Aorta (tissue), 5 donors: ENCODE measurements at regions of chr6 and their contacts with region 1.

Region 1: GRCh38 chr6:105136431-105137350 is 43.1 kb downstream of the POPDC3 start:
- DNase-seq: peak; percentile 83 to 84
- ATAC-seq: peak; percentile 73
- H3K4me3 ChIP-seq: peak overlapping the region; percentile 77 to 94
- H3K27ac ChIP-seq: peak overlapping the region in 1 of 2 donors; percentile 1
- H3K4me1 ChIP-seq: no peaks in the 10 kb centered on the region
- H3K27me3 ChIP-seq: no peaks in the 10 kb centered on the region

Region 2: DNA sequence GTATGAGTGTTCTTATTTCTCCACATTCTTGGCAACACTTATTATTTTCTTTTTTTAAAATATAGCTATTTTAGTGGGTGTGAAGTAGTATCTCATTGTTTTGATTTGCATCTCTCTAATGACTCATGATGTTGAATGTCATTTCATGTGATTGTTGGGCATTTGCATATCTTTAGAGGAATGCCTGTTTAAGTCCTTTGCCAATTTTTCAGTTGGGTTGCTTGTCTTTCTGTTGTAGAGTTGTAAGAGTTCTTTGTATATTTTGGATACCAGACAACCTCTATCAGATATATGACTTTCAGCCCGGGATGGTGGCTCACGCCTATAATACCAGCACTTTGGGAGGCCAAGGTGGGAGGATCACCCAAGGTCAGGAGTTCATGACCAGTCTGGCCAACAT is 48.2 kb after region 1 on chr6:
- intact Hi-C with region 1: no loop called
- DNase-seq: no peak
- ATAC-seq: no peak
- H3K4me3 ChIP-seq: no peak overlapping the region
- H3K27ac ChIP-seq: no peak overlapping the region
- H3K4me1 ChIP-seq: no peaks in the 10 kb centered on the region
- H3K27me3 ChIP-seq: no peaks in the 10 kb centered on the region

Region 3: GRCh38 chr6:105199711-105200110 is 63.0 kb after region 1 on chr6:
- intact Hi-C with region 1: no loop called
- DNase-seq: no peak
- ATAC-seq: no peak
- H3K4me3 ChIP-seq: no peak overlapping the region
- H3K27ac ChIP-seq: no peak overlapping the region
- H3K4me1 ChIP-seq: no peaks in the 10 kb centered on the region
- H3K27me3 ChIP-seq: no peaks in the 10 kb centered on the region

Region 4: GRCh38 chr6:105363100-105363754 is 226.5 kb after region 1 on chr6:
- intact Hi-C with region 1: no loop called
- DNase-seq: no peak
- ATAC-seq: no peak
- H3K4me3 ChIP-seq: no peak overlapping the region
- H3K27ac ChIP-seq: no peak overlapping the region
- H3K4me1 ChIP-seq: no peaks in the 10 kb centered on the region
- H3K27me3 ChIP-seq: no peaks in the 10 kb centered on the region

Region 5: DNA sequence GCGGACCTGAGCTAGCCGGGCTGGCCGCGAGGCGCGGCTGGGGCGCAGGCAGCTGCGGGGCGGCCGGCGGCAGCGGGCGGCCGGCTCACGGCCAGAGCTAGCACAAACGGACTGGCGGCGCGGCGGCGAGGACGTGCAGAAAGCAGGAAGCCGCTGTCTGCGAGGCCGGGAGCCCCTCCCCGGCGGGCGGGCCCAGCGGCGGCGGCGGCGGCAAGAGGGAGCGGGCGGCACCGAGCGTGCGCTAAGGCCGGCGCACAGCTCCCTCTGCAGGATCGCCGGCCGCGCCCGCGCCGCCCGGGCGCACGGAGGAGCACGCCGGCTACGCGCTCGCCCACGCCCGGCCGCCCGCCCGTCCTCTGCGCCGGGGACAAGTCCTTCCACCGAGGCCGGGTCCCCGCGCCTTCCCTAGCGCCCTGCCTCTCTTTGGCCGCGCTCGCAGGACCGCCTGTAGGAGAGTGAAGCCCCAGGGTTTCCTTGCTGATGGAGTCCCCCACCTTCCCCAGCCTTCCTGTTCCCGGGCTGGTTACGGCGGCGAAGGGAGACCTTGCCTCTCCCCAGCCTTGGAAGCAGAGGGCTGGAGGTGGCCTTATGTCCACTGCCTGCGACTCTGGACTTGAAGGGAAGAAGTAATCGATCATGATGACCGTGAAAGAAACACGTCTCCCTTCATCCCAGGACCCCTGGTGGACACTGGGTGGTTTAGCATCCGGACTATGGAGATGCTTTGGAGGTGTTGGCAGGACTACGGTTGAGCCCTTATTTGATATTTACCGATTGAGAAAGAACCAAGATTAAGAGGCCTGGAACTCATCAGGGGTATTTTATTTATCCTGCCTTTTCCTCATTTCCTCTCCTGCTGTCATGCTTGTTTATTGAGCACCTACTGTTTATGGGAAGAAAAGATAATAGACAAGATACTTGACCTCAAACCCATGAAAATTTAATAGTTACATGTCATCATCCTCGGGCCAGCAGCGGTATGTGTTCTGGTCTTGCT is 266.5 kb after region 1 on chr6 and contains the start of gene PREP:
- intact Hi-C with region 1: loop called in 1 of 2 experiments (anchors 2 kb)
- DNase-seq: peak; percentile 93 to 94
- ATAC-seq: peak; percentile 97
- H3K4me3 ChIP-seq: peak within 1 kb of the TSS; percentile 62 to 96
- H3K27ac ChIP-seq: peak within 1 kb of the TSS in 1 of 2 donors; percentile 49
- H3K4me1 ChIP-seq: no peaks in the 10 kb centered on the region
- H3K27me3 ChIP-seq: no peaks in the 10 kb centered on the region
- total RNA-seq, gene PREP: 20.4 to 21.8 TPM